Prostate gland (tissue), 2 donors: ENCODE measurements at regions of chr3 and their contacts with region 1.

Region 1: GRCh38 chr3:58018892-58019742 is 10.9 kb downstream of the FLNB start:
- DNase-seq: no peak
- H3K4me3 ChIP-seq: no peak overlapping the region
- H3K27ac ChIP-seq: peak overlapping the region; percentile 67 to 84
- H3K4me1 ChIP-seq: peaks cover 41% of the 10 kb centered on the region
- H3K27me3 ChIP-seq: no peaks in the 10 kb centered on the region
- CTCF ChIP-seq: no peak
- POLR2A ChIP-seq: no peak

Region 2: GRCh38 chr3:57983734-57984518 is 35.2 kb before region 1 on chr3:
- intact Hi-C with region 1: no loop called
- DNase-seq: no peak
- H3K4me3 ChIP-seq: no peak overlapping the region
- H3K27ac ChIP-seq: no peak overlapping the region
- H3K4me1 ChIP-seq: no peaks in the 10 kb centered on the region
- H3K27me3 ChIP-seq: no peaks in the 10 kb centered on the region
- CTCF ChIP-seq: no peak
- POLR2A ChIP-seq: no peak

Region 3: DNA sequence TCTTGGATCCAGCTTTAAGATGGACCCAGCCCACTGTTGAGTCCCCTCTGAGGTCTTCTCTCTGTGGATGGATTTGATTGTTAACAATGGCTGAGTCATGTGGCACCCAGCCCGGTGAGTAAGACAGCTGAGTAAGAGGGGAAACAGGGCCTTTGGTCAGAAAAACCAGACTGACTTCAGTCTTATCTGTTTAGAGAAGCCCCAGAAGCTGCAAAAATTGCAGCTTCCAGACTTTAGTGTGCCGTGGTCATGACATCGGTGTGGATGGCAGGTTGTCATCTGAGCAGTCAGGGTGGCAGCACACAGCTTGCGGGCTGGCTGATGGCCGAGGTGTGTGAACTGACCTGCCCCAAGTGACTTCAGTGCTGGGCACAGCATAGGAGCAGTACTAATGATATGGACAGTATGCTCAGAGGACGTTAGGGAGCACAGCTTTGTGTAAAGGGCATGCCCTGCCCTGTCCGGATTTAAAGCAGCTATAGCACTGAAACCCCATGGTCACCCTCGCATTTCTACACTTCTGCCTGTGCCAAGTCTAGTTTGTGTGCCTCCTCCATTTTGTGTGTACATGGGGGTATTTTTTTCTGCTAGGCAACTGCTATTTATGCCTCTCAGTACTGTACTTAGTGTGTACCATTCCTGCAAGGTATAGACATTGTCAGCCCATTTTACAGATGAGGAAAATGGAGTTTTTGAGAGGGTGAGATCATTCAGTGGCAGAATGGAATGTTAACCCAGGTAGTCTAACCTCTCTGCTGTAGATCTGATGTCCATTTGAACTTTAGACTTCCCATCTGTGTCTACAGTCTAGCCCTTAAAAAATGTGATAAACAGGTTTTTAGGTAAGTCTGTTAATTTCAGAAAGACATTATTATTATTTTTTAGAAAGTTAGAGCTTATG is 33.5 kb after region 1 on chr3:
- intact Hi-C with region 1: loop called (anchors 5 kb)
- DNase-seq: peak; percentile 77
- H3K4me3 ChIP-seq: no peak overlapping the region
- H3K27ac ChIP-seq: peak overlapping the region; percentile 54 to 67
- H3K4me1 ChIP-seq: peaks cover 15% of the 10 kb centered on the region
- H3K27me3 ChIP-seq: no peaks in the 10 kb centered on the region
- CTCF ChIP-seq: no peak
- POLR2A ChIP-seq: no peak